ENCODE measurements at regions of chr6 and their contacts with region 1.

Region 1: GRCh38 chr6:147005499-147005898 is 198.7 kb upstream of the STXBP5 start:
- DNase-seq: no peak
- H3K4me3 ChIP-seq: no peak overlapping the region
- H3K27ac ChIP-seq: no peak overlapping the region
- H3K4me1 ChIP-seq: peaks cover 0 to 8% (median under 1%) of the 10 kb centered on the region in 4 donors
- H3K27me3 ChIP-seq: no peaks in the 10 kb centered on the region
- CTCF ChIP-seq: no peak
- EP300 ChIP-seq: no peak
- POLR2A ChIP-seq: no peak

Region 2: GRCh38 chr6:147043994-147044477 is 38.5 kb after region 1 on chr6:
- in situ Hi-C with region 1: no loop called
- intact Hi-C with region 1: no loop called
- DNase-seq: no peak
- H3K4me3 ChIP-seq: no peak overlapping the region
- H3K27ac ChIP-seq: no peak overlapping the region
- H3K4me1 ChIP-seq: no peaks in the 10 kb centered on the region
- H3K27me3 ChIP-seq: no peaks in the 10 kb centered on the region
- CTCF ChIP-seq: no peak
- EP300 ChIP-seq: no peak
- POLR2A ChIP-seq: no peak

Region 3: DNA sequence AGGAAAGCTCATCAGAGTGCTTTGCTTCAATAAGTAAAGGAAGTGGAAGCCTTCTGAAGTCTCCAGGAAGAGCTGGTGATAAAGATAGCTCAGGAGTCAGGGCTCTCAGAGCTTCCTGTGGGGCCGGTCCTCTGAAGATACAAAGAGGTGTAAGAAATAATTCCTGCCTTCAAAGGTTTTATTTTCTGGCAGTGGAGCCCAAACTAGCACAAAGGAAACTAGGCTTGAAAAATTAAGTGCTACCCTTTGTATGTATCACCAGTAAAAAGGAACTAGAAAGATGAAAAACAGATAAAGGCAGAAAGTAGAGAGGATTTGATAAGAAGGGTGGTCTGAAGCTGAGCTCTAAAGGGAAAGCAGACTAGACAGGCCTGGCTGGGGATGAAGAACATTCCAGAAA is 1133.1 kb after region 1 on chr6:
- in situ Hi-C with region 1: no loop called
- intact Hi-C with region 1: loop called (anchors 5 kb)
- DNase-seq: no peak
- H3K4me3 ChIP-seq: no peak overlapping the region
- H3K27ac ChIP-seq: no peak overlapping the region
- H3K4me1 ChIP-seq: peaks cover 0 to 7% (median 2%) of the 10 kb centered on the region in 4 donors
- H3K27me3 ChIP-seq: no peaks in the 10 kb centered on the region
- CTCF ChIP-seq: no peak
- EP300 ChIP-seq: no peak
- POLR2A ChIP-seq: no peak

Measured in transverse colon (tissue), 4 donors.